Ascending aorta (tissue), 2 donors: ENCODE measurements at regions of chr4 and their contacts with region 1.

Region 1: DNA sequence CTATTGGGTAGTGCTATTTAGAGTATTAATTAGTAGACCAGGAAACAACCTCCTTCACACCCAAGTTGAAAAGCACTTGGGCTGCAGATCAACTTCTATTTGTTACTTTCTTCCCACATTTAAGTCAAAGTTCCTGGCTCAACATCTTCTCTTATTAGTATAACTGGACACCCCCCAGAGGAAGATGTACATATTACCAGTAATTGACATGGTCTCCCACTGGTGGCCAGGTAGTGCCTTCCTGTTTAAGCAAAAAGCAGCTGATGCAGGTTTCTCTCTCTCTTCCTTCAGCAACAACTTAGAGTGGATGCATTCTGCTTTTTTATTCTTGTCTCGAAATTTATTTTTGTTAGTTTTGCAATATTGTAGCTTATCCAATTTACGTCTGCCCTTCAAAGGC is 438.1 kb downstream of the GBA3 start:
- DNase-seq: no peak
- H3K4me3 ChIP-seq: no peak overlapping the region
- H3K27ac ChIP-seq: no peak overlapping the region
- H3K4me1 ChIP-seq: no peaks in the 10 kb centered on the region
- H3K27me3 ChIP-seq: no peaks in the 10 kb centered on the region
- CTCF ChIP-seq: no peak

Region 2: DNA sequence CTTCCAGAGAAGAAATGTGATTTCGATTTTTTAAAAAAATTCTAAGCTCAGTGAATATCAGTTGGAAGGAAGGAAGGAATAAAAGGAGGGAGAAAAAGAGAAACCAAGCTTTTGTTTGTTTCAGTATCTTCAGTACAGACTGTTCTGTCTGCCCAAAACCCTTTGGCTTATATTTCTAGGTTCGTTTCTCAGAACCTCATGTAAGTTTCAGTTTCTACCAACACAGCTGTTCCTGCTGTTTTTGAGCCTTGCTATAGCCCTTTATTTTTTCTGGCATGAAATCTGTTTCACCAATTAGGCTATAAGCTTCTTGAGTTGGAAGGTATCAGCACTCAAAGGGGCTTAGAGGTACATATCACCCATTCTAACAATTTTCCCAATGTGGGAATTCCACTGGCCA is 280.2 kb before region 1 on chr4:
- intact Hi-C with region 1: no loop called
- DNase-seq: no peak
- H3K4me3 ChIP-seq: no peak overlapping the region
- H3K27ac ChIP-seq: no peak overlapping the region
- H3K4me1 ChIP-seq: no peaks in the 10 kb centered on the region
- H3K27me3 ChIP-seq: no peaks in the 10 kb centered on the region
- CTCF ChIP-seq: no peak

Region 3: DNA sequence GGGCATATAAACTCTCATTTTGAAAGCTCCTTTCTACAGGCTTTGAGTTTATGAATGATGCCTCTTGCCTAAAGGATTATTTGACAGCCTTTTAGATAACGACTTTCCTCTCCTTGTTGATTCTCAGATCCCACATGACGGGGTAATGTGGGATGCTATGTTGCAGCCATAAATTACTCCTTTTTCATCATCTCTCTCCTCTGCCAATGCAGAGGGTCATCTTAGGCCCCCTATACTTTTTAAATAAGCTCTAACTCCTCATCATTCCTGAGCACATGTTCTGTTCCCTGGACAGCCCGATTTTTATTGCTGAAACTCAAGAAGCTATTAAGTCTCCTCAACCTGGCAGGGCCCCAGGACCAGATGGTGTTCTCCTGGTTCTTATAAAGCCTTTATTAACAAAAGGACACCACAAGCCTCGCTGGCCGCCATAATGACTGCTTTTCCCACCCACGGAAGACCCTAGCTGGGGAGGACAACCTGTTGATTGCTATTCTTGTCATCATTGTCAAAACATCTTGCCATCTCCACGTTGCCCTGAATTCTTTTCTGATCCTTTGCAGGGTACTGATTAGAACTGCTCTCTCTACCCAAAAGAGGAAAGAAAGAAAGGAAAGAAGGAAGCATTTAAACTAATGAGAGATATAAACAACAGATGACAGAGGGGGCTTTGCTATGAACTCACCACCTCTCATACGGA is 1302.8 kb after region 1 on chr4:
- intact Hi-C with region 1: loop called (anchors 5 kb)
- DNase-seq: no peak
- H3K4me3 ChIP-seq: no peak overlapping the region
- H3K27ac ChIP-seq: no peak overlapping the region
- H3K4me1 ChIP-seq: no peaks in the 10 kb centered on the region
- H3K27me3 ChIP-seq: no peaks in the 10 kb centered on the region
- CTCF ChIP-seq: no peak